Mammary epithelial cell (primary cell): ENCODE measurements at regions of chr1 and their contacts with region 1.

Region 1: DNA sequence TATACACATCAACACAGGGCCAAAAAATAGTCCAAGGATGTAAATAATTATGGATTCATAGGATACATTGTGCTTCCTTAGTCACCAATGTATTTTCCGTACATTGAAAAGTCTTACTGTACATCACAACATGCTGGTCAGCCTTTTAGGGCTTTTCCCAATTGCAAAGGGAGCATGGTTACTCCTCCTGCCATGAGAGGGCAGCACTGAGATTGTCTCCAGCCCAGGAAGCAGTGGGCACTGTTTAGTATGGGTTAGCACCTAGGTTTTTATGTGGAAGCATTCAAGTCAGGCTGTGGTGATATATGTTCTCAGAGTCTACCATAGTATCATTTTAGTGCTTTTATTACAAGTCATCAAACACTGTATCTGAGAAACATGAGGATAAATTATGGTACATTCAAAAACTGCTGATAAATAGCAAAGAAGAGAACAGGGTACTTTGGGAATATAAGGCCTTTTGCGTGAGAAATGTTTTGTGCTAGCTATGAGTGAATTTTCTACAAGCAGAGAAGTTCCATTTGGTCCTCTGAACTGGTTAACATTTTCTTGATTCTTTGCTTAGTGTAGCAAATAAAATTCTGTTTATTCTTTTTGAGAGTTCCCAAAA is 34.0 kb downstream of the ST6GALNAC5 start:
- DNase-seq: peak; percentile 60
- H3K4me3 ChIP-seq: no peak overlapping the region
- H3K27ac ChIP-seq: no peak overlapping the region
- H3K4me1 ChIP-seq: no peaks in the 10 kb centered on the region
- H3K27me3 ChIP-seq: no peaks in the 10 kb centered on the region
- CTCF ChIP-seq: peak; percentile 88 to 95

Region 2: GRCh38 chr1:76330991-76331603 is 570.2 kb before region 1 on chr1:
- CTCF ChIA-PET with region 1: no interaction called
- dilution Hi-C with region 1: no loop called
- in situ Hi-C with region 1: no loop called
- intact Hi-C with region 1: loop called (anchors 2 kb)
- DNase-seq: peak; percentile 46
- H3K4me3 ChIP-seq: no peak overlapping the region
- H3K27ac ChIP-seq: no peak overlapping the region
- H3K4me1 ChIP-seq: no peaks in the 10 kb centered on the region
- H3K27me3 ChIP-seq: no peaks in the 10 kb centered on the region
- CTCF ChIP-seq: peak; percentile 86 to 97

Region 3: DNA sequence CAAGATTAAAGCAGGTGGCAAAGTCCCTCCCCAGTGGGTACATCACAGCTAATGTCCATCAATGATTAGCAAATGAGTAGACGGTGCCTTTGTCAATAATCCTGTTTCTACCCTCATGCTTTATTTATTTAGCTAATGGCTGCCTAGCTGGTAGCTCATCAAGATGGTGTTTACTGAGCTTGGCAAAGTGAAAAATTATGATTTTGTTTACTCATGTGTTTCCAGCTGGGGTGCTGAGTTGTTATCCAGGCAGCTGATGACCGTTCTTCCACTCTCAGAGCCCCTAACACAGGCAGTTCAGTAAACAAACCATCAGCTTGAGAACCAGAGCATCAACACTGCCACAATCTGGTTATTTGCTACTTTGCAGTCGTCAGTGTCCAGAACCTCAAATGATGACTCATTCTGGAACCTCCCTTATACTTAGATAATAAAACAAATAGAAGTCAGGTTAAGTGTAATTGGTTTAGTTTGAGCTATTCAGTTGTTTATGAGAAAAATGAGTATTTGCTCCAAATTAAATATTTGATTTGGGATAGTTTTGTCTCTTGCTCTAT is 129.9 kb after region 1 on chr1:
- CTCF ChIA-PET with region 1: no interaction called
- dilution Hi-C with region 1: no loop called
- in situ Hi-C with region 1: no loop called
- intact Hi-C with region 1: loop called (anchors 1 kb)
- DNase-seq: peak; percentile 59
- H3K4me3 ChIP-seq: no peak overlapping the region
- H3K27ac ChIP-seq: no peak overlapping the region
- H3K4me1 ChIP-seq: peaks cover 6% of the 10 kb centered on the region
- H3K27me3 ChIP-seq: no peaks in the 10 kb centered on the region
- CTCF ChIP-seq: peak in 1 of 2 donors; percentile 40

Region 4: GRCh38 chr1:77120950-77121349 is 219.7 kb after region 1 on chr1:
- CTCF ChIA-PET with region 1: no interaction called
- dilution Hi-C with region 1: no loop called
- in situ Hi-C with region 1: loop called (anchors 10 to 25 kb)
- intact Hi-C with region 1: loop called (anchors 1 kb)
- DNase-seq: no peak
- H3K4me3 ChIP-seq: no peak overlapping the region
- H3K27ac ChIP-seq: no peak overlapping the region
- H3K4me1 ChIP-seq: no peaks in the 10 kb centered on the region
- H3K27me3 ChIP-seq: no peaks in the 10 kb centered on the region
- CTCF ChIP-seq: no peak